ENCODE measurements at regions of chr7 and their contacts with region 1.

Region 1: GRCh38 chr7:50467817-50468610 is 17.9 kb upstream of the FIGNL1 start:
- H3K4me3 Mint-ChIP-seq: no peak overlapping the region
- H3K27ac Mint-ChIP-seq: no peak overlapping the region
- H3K4me1 Mint-ChIP-seq: no peaks in the 10 kb centered on the region
- H3K27me3 Mint-ChIP-seq: peaks cover 15% of the 10 kb centered on the region

Region 2: GRCh38 chr7:50418086-50418515 is 49.9 kb before region 1 on chr7:
- intact Hi-C with region 1: no loop called
- H3K4me3 Mint-ChIP-seq: no peak overlapping the region
- H3K27ac Mint-ChIP-seq: no peak overlapping the region
- H3K4me1 Mint-ChIP-seq: peaks cover 46% of the 10 kb centered on the region
- H3K27me3 Mint-ChIP-seq: no peaks in the 10 kb centered on the region

Region 3: GRCh38 chr7:50632561-50633413 is 164.8 kb after region 1 on chr7:
- intact Hi-C with region 1: loop called (anchors 5 kb)
- H3K4me3 Mint-ChIP-seq: no peak overlapping the region
- H3K27ac Mint-ChIP-seq: no peak overlapping the region
- H3K4me1 Mint-ChIP-seq: no peaks in the 10 kb centered on the region
- H3K27me3 Mint-ChIP-seq: no peaks in the 10 kb centered on the region

Region 4: GRCh38 chr7:50679218-50680007 is 211.4 kb after region 1 on chr7:
- intact Hi-C with region 1: loop called (anchors 1 kb)
- H3K4me3 Mint-ChIP-seq: no peak overlapping the region
- H3K27ac Mint-ChIP-seq: no peak overlapping the region
- H3K4me1 Mint-ChIP-seq: peaks cover 9% of the 10 kb centered on the region
- H3K27me3 Mint-ChIP-seq: no peaks in the 10 kb centered on the region

Region 5: GRCh38 chr7:51067757-51068156 is 599.7 kb after region 1 on chr7:
- intact Hi-C with region 1: loop called (anchors 5 kb)
- H3K4me3 Mint-ChIP-seq: no peak overlapping the region
- H3K27ac Mint-ChIP-seq: no peak overlapping the region
- H3K4me1 Mint-ChIP-seq: no peaks in the 10 kb centered on the region
- H3K27me3 Mint-ChIP-seq: no peaks in the 10 kb centered on the region

Region 6: DNA sequence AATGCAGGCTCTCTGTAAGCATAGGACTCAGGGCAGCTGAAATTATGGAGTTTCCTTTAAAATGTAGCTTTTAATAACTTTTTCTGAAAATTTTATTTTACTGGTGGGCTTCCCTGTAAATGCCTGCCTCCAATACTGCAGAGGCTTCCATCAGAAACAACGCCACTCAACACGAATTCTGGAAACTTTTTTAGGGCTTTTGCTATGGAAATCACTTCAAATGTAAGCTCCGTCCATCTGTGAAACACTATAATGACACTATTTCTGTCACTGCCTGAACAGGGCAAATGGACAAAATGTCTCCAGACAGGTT is 693.2 kb after region 1 on chr7:
- intact Hi-C with region 1: loop called (anchors 2 kb)
- H3K4me3 Mint-ChIP-seq: no peak overlapping the region
- H3K27ac Mint-ChIP-seq: no peak overlapping the region
- H3K4me1 Mint-ChIP-seq: peaks cover 8% of the 10 kb centered on the region
- H3K27me3 Mint-ChIP-seq: peaks cover 4% of the 10 kb centered on the region